CD8-positive, alpha-beta T cell (primary cell): ENCODE measurements at regions of chr1 and their contacts with region 1.

Region 1: GRCh38 chr1:16236511-16237342 is at the start of gene CPLANE2:
- DNase-seq: peak; percentile 88 to 98 (median 96)
- ATAC-seq: peak; percentile 77
- H3K4me3 ChIP-seq: peak within 1 kb of the TSS; percentile 88 to 92
- H3K4me3 Mint-ChIP-seq: peak within 1 kb of the TSS; percentile 88
- H3K27ac ChIP-seq: peak within 1 kb of the TSS; percentile 85 to 91
- H3K27ac Mint-ChIP-seq: peak within 1 kb of the TSS; percentile 92
- H3K4me1 ChIP-seq: peaks cover 17% of the 10 kb centered on the region
- H3K4me1 Mint-ChIP-seq: peaks cover 20% of the 10 kb centered on the region
- H3K27me3 ChIP-seq: no peaks in the 10 kb centered on the region
- H3K27me3 Mint-ChIP-seq: no peaks in the 10 kb centered on the region
- CTCF ChIP-seq: no peak
- total RNA-seq, gene CPLANE2: 5.2 to 5.6 TPM

Region 2: GRCh38 chr1:15847100-15847892 is 389.4 kb before region 1 on chr1 and contains the start of gene SPEN:
- CTCF ChIA-PET with region 1: no interaction called
- POLR2A ChIA-PET with region 1: interaction called, 3 read pairs
- intact Hi-C with region 1: loop called in 1 of 2 experiments (anchors 2 kb)
- DNase-seq: peak; percentile 95 to 99 (median 99)
- ATAC-seq: peak; percentile 80
- H3K4me3 ChIP-seq: peak within 1 kb of the TSS; percentile 96 to 99
- H3K4me3 Mint-ChIP-seq: peak within 1 kb of the TSS; percentile 98
- H3K27ac ChIP-seq: peak within 1 kb of the TSS; percentile 91 to 93
- H3K27ac Mint-ChIP-seq: peak within 1 kb of the TSS; percentile 97
- H3K4me1 ChIP-seq: peaks cover 24% of the 10 kb centered on the region
- H3K4me1 Mint-ChIP-seq: peaks cover 36% of the 10 kb centered on the region
- H3K27me3 ChIP-seq: no peaks in the 10 kb centered on the region
- H3K27me3 Mint-ChIP-seq: no peaks in the 10 kb centered on the region
- CTCF ChIP-seq: no peak
- total RNA-seq, gene SPEN: 85.9 to 87.3 TPM

Region 3: DNA sequence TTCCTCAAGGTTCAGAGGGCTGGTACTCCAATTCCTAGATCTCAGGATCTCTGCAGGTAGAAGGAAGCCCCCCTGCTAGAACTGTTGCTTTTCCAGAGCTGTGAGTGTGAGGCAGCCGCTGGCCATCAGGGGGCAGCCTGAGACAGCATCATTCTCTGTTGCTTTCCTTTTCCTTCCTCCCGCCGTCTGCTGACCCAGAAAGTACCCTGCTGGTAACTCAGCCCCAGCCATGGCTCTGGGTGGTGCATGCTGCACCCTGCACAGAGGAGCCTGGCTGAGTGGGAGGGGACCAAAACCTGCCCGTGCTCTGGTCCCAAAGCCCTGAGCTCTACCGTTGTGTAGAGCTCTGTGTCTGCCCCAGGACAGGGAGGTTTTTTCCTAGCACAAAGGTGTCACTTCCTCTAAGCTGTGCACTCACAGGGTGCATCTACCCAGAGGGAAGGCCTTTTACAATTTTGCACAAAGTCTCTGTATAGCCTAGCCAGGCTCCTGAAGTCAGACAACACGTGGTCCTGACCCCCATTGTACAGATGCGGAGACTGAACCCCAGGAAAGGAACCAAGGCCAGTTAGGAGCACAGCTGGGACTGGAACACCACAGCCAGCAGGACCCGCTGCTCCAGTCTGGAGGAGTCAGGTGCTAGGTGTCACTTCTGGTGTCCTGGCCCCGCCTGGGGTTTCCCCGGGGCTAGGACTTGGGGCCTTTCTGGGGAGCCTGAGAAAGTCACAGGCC is 157.6 kb before region 1 on chr1:
- CTCF ChIA-PET with region 1: interaction called, 11 read pairs
- POLR2A ChIA-PET with region 1: no interaction called
- intact Hi-C with region 1: no loop called
- DNase-seq: peak; percentile 54 to 87 (median 76)
- ATAC-seq: peak; percentile 83
- H3K4me3 ChIP-seq: peak overlapping the region; percentile 41 to 53
- H3K4me3 Mint-ChIP-seq: peak overlapping the region; percentile 81
- H3K27ac ChIP-seq: peak overlapping the region in 1 of 2 experiments; percentile 28
- H3K27ac Mint-ChIP-seq: peak overlapping the region; percentile 32
- H3K4me1 ChIP-seq: peaks cover 6% of the 10 kb centered on the region
- H3K4me1 Mint-ChIP-seq: peaks cover 11% of the 10 kb centered on the region
- H3K27me3 ChIP-seq: peaks cover 0 to under 1% of the 10 kb centered on the region in 2 experiments
- H3K27me3 Mint-ChIP-seq: peaks cover 9% of the 10 kb centered on the region
- CTCF ChIP-seq: peak; percentile 82

Region 4: DNA sequence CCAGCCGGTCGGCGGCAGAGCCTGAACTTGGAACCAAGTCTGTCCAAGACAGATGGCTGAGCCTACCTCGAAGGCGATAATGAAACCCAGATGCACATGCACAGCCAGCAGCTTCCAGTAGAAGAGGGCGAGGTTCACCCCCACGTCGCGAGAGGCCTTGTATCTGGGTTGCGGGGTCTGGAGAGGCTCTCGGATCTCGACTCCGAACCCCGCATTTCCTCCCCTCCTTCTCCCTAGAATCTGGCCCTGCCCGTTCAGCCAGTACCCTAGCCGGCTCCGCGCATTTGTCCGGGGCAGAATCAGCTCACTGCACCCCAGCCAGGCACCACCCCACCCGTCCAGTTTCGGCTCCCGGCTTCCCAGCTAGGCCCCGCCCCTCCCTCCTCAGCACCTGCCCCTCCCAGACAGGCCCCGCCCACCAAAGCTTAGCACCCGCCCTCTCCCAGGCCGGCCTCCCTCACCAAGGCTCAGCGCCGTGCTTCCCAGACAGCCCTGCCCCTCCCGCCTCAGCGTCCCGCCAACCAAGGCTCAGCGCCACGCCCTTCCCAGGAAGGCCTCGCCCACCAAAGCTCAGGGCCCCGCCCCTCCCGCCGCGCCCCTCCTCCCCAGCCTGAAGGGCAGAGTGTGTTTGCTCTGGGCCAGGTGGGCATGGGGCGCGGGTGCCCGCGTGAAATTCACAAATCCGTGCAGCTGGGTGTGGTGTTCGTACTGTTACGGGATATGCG is 19.5 kb before region 1 on chr1:
- CTCF ChIA-PET with region 1: interaction called, 4 read pairs
- POLR2A ChIA-PET with region 1: interaction called, 5 read pairs
- intact Hi-C with region 1: loop called (anchors 1 kb)
- DNase-seq: peak; percentile 84 to 97 (median 94)
- ATAC-seq: peak; percentile 96
- H3K4me3 ChIP-seq: peak overlapping the region; percentile 47 to 65
- H3K4me3 Mint-ChIP-seq: peak overlapping the region; percentile 85
- H3K27ac ChIP-seq: peak overlapping the region in 1 of 2 experiments; percentile 26
- H3K27ac Mint-ChIP-seq: peak overlapping the region; percentile 71
- H3K4me1 ChIP-seq: peaks cover 17% of the 10 kb centered on the region
- H3K4me1 Mint-ChIP-seq: peaks cover 18% of the 10 kb centered on the region
- H3K27me3 ChIP-seq: no peaks in the 10 kb centered on the region
- H3K27me3 Mint-ChIP-seq: no peaks in the 10 kb centered on the region
- CTCF ChIP-seq: no peak

Region 5: DNA sequence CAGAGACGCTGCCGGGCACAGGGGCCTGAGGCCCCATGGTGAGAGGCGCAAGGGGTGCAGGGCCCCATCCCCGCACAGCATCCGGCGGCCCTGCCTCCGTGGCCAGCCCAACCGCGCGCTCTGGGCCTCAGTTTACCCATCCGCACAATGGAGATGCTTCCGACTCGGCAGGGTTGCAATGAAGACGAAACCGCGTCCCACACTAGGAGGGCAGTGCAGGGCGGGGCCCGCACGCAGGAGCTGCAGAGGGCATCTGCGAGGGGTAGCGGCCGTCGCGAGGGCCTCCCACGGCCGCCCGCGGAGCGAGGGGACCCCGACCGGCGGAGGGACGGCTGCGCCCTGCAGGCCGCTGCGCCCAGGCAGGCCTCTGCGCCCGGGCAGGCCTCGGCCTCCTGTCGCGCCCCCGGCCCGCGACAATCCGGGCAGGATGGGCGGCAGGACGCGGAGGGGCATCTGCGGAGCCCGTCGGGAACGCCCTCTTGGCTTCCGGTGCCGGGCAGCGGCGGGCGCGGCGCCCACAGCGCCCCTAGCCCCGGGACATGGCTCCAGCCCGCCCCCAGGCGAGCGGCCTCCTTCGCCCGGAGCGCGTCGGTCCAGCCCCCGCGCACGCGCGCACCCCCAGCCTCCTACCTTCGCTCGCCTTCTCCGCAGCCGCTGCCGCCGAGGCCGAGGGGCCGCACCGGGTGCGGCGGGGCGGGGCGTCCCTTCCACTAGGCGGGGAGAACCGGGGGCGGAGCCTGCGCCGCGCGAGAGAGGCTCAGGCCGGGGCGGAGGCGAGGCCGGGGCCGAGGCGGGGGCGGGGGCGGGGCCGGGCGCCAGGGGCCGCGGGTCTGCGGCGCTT is 262.1 kb after region 1 on chr1:
- CTCF ChIA-PET with region 1: no interaction called
- POLR2A ChIA-PET with region 1: no interaction called
- intact Hi-C with region 1: loop called in 1 of 2 experiments (anchors 5 kb)
- DNase-seq: peak; percentile 62 to 91 (median 85)
- ATAC-seq: peak; percentile 90
- H3K4me3 ChIP-seq: peak overlapping the region; percentile 58 to 92
- H3K4me3 Mint-ChIP-seq: peak overlapping the region; percentile 92
- H3K27ac ChIP-seq: peak overlapping the region; percentile 37 to 66
- H3K27ac Mint-ChIP-seq: no peak overlapping the region
- H3K4me1 ChIP-seq: peaks cover 10% of the 10 kb centered on the region
- H3K4me1 Mint-ChIP-seq: peaks cover 20% of the 10 kb centered on the region
- H3K27me3 ChIP-seq: no peaks in the 10 kb centered on the region
- H3K27me3 Mint-ChIP-seq: no peaks in the 10 kb centered on the region
- CTCF ChIP-seq: no peak